Mammary epithelial cell (primary cell): ENCODE measurements at regions of chr13 and their contacts with region 1.

Region 1: GRCh38 chr13:70623239-70623638 is 515.0 kb upstream of the KLHL1 start:
- DNase-seq: no peak
- H3K4me3 ChIP-seq: no peak overlapping the region
- H3K27ac ChIP-seq: no peak overlapping the region
- H3K4me1 ChIP-seq: no peaks in the 10 kb centered on the region
- H3K27me3 ChIP-seq: no peaks in the 10 kb centered on the region
- CTCF ChIP-seq: peak; percentile 35 to 43

Region 2: GRCh38 chr13:70473907-70474306 is 149.3 kb before region 1 on chr13:
- CTCF ChIA-PET with region 1: no interaction called
- dilution Hi-C with region 1: no loop called
- in situ Hi-C with region 1: no loop called
- intact Hi-C with region 1: no loop called
- DNase-seq: no peak
- H3K4me3 ChIP-seq: no peak overlapping the region
- H3K27ac ChIP-seq: no peak overlapping the region
- H3K4me1 ChIP-seq: no peaks in the 10 kb centered on the region
- H3K27me3 ChIP-seq: no peaks in the 10 kb centered on the region
- CTCF ChIP-seq: no peak

Region 3: GRCh38 chr13:70541451-70541850 is 81.8 kb before region 1 on chr13:
- CTCF ChIA-PET with region 1: no interaction called
- dilution Hi-C with region 1: no loop called
- in situ Hi-C with region 1: no loop called
- intact Hi-C with region 1: no loop called
- DNase-seq: peak; percentile 0
- H3K4me3 ChIP-seq: no peak overlapping the region
- H3K27ac ChIP-seq: no peak overlapping the region
- H3K4me1 ChIP-seq: no peaks in the 10 kb centered on the region
- H3K27me3 ChIP-seq: no peaks in the 10 kb centered on the region
- CTCF ChIP-seq: no peak

Region 4: GRCh38 chr13:70708775-70709174 is 85.5 kb after region 1 on chr13:
- CTCF ChIA-PET with region 1: no interaction called
- dilution Hi-C with region 1: no loop called
- in situ Hi-C with region 1: no loop called
- intact Hi-C with region 1: no loop called
- DNase-seq: no peak
- H3K4me3 ChIP-seq: no peak overlapping the region
- H3K27ac ChIP-seq: no peak overlapping the region
- H3K4me1 ChIP-seq: no peaks in the 10 kb centered on the region
- H3K27me3 ChIP-seq: no peaks in the 10 kb centered on the region
- CTCF ChIP-seq: no peak

Region 5: GRCh38 chr13:70960841-70961443 is 337.7 kb after region 1 on chr13:
- CTCF ChIA-PET with region 1: no interaction called
- dilution Hi-C with region 1: no loop called
- in situ Hi-C with region 1: no loop called
- intact Hi-C with region 1: loop called (anchors 10 kb)
- DNase-seq: peak; percentile 5
- H3K4me3 ChIP-seq: no peak overlapping the region
- H3K27ac ChIP-seq: no peak overlapping the region
- H3K4me1 ChIP-seq: no peaks in the 10 kb centered on the region
- H3K27me3 ChIP-seq: no peaks in the 10 kb centered on the region
- CTCF ChIP-seq: peak; percentile 41 to 69

Region 6: GRCh38 chr13:71218960-71219359 is 595.7 kb after region 1 on chr13:
- CTCF ChIA-PET with region 1: no interaction called
- dilution Hi-C with region 1: no loop called
- in situ Hi-C with region 1: no loop called
- intact Hi-C with region 1: loop called (anchors 10 kb)
- DNase-seq: no peak
- H3K4me3 ChIP-seq: no peak overlapping the region
- H3K27ac ChIP-seq: no peak overlapping the region
- H3K4me1 ChIP-seq: no peaks in the 10 kb centered on the region
- H3K27me3 ChIP-seq: no peaks in the 10 kb centered on the region
- CTCF ChIP-seq: peak in 1 of 2 donors; percentile 25